ENCODE measurements at regions of chr9 and their contacts with region 1.

Region 1: GRCh38 chr9:93108291-93109041 is 12.4 kb downstream of the CARD19 start:
- DNase-seq: peak; percentile 80
- H3K4me3 Mint-ChIP-seq: no peak overlapping the region
- H3K27ac Mint-ChIP-seq: peak overlapping the region; percentile 76
- H3K4me1 Mint-ChIP-seq: peaks cover 55% of the 10 kb centered on the region
- H3K27me3 Mint-ChIP-seq: no peaks in the 10 kb centered on the region

Region 2: DNA sequence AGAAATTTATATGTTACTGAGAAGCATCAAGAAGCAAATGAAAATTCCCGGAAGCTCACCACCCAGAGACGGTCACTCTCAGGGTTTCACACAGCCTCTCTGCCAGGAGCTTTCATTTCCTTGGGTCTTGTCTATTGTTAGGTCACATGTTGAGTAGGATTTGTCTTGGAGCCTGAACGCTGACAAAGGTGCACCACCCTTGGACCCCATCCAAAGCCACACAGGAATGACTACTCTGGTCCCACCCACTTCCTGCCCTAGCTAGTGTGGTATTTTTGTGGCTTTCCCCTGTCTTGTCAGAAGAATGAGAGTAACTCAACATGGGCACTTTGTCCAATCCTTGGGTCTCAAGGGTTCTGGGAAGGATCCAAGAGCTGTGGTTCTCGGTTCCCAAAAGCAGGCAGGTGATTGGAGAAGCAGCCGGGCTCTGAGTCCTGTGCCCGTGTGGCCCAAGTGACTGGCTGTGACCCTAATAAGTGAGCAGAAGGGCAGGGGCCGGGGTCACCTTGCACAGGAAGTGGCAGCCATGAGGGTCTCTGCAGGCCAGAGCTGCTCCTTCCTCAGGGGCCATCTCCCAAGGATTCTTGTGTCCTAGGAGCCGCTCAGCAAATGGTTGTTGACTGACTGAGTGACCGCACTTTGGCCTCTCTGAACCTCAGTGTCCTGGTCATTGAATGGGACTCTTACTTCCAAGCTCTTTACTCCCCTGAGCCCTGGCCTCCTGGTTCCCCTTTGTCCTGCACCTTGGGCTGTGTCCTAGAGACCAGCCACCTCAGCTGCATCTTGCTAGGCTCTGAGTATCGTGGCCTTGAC is 154.2 kb before region 1 on chr9:
- CTCF ChIA-PET with region 1: interaction called, 10 read pairs
- intact Hi-C with region 1: loop called (anchors 1 kb)
- DNase-seq: peak; percentile 95
- H3K4me3 Mint-ChIP-seq: peak overlapping the region; percentile 60
- H3K27ac Mint-ChIP-seq: peak overlapping the region; percentile 91
- H3K4me1 Mint-ChIP-seq: peaks cover 75% of the 10 kb centered on the region
- H3K27me3 Mint-ChIP-seq: no peaks in the 10 kb centered on the region

Region 3: DNA sequence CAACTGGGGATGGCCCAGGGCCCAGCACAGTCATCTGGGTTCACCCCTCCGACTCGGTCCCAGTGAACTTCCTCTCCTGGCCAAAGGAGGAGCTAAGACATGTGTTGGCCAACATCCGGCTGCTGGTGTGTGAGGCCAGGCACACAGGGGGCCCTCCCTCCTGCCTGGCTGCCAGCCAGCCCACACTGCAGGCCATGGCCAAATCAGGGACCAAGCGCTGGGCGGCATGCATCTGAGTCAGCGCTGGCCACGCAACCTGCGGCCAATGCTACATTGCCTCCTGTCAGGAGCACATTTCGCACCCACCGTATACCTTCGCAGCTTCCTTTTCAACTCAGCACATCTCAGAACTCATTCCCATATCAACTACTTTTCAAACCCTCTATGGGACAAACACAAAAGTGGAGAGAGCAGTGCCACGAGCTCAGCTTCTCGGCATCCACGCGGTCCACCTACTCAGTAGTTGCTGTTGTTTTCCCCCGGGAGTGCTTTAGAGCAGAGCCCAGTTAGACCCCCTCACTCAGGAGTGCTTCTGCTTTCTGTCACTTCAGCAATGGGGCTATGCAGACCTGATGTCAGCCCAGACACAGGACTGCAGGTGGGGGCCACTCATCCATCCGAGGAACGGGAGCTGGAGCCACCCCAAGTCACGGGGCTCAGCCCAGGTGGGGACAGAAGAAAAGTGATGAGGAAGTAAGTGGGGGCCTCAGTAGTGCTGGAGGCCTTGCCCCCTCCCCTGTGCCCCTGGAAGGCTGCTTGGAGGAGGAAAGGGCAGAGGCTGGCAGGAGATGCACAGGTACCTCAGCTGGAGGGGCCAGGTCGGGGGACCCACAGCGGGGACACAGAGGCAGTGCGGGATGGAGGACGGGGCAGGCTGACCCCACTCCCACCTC is 11.7 kb after region 1 on chr9:
- CTCF ChIA-PET with region 1: interaction called, 17 read pairs
- intact Hi-C with region 1: no loop called
- DNase-seq: peak; percentile 72
- H3K4me3 Mint-ChIP-seq: no peak overlapping the region
- H3K27ac Mint-ChIP-seq: peak overlapping the region; percentile 68
- H3K4me1 Mint-ChIP-seq: peaks cover 17% of the 10 kb centered on the region
- H3K27me3 Mint-ChIP-seq: no peaks in the 10 kb centered on the region

Region 4: DNA sequence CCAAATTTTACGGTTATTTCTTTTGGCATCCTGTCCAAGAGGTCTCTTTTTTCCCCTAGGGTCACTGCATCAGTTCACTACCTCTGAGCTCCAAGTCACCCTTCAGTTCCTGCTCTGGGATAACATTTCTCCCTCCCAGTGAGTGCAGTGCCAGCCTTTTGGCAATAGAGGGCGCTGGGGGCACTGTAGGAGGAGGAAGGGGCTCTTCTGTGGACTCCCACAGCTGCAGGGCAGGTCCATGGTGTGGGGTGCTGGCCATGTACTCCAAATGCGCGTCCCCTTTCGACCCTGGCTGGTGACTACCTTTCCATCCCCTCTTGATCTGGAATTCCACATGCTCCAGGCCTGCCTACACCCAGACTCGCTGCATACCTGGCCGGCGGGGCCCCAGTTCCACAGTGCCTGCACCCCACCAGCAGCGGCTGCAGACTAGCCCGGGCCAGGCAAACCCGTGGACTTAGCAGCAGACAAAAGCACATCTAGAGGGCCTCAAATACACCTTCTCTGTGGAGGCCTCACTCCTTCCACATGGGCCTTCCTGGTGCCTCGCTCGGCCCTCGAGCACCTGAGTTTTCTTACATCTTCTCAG is 45.9 kb after region 1 on chr9:
- CTCF ChIA-PET with region 1: interaction called, 10 read pairs
- intact Hi-C with region 1: loop called (anchors 1 kb)
- DNase-seq: peak; percentile 75
- H3K4me3 Mint-ChIP-seq: no peak overlapping the region
- H3K27ac Mint-ChIP-seq: no peak overlapping the region
- H3K4me1 Mint-ChIP-seq: peaks cover 25% of the 10 kb centered on the region
- H3K27me3 Mint-ChIP-seq: no peaks in the 10 kb centered on the region

Measured in activated naive CD4-positive, alpha-beta T cell treated with anti-CD3 and anti-CD28 coated beads for 36 hours (primary cell).